A673 (cell line): ENCODE measurements at regions of chr3 and their contacts with region 1.

Region 1: DNA sequence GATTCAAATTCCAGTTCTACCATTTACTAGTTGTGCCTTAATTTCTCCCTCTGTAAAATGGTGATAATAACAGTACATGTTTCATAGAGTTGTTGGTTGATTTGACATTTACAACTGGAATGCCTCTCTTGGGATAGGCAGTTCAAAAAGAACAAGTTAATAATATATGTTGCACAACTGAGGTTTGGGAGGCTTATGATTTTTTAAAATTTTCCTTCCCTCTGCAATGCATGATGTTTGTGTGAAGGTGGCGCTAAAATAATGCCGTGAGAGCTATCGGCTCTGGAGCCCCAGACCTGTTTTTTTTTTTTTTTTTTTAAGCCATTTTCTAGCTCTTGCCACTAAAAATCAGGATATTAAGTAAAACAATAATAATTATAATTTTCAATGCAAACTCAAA is 18.6 kb downstream of the DNAJB11 start:
- DNase-seq: peak; percentile 50
- H3K4me3 ChIP-seq: no peak overlapping the region
- H3K27ac ChIP-seq: no peak overlapping the region
- H3K4me1 ChIP-seq: no peaks in the 10 kb centered on the region
- H3K27me3 ChIP-seq: no peaks in the 10 kb centered on the region
- CTCF ChIP-seq: peak; percentile 68

Region 2: GRCh38 chr3:186821429-186822367 is 232.6 kb after region 1 on chr3:
- CTCF ChIA-PET with region 1: interaction called, 6 read pairs
- POLR2A ChIA-PET with region 1: no interaction called
- intact Hi-C with region 1: loop called (anchors 2 kb)
- DNase-seq: peak; percentile 76
- H3K4me3 ChIP-seq: no peak overlapping the region
- H3K27ac ChIP-seq: no peak overlapping the region
- H3K4me1 ChIP-seq: peaks cover 18% of the 10 kb centered on the region
- H3K27me3 ChIP-seq: no peaks in the 10 kb centered on the region
- CTCF ChIP-seq: peak; percentile 75